ENCODE measurements at regions of chr12 and their contacts with region 1.

Region 1: GRCh38 chr12:93968536-93969285 is 179.7 kb upstream of the PLXNC1 start:
- DNase-seq: no peak
- ATAC-seq: no peak
- H3K4me3 ChIP-seq: no peak overlapping the region
- H3K27ac ChIP-seq: no peak overlapping the region
- H3K4me1 ChIP-seq: peaks cover 0 to 12% (median 4%) of the 10 kb centered on the region in 12 donors
- H3K27me3 ChIP-seq: no peaks in the 10 kb centered on the region
- CTCF ChIP-seq: no peak
- POLR2A ChIP-seq: no peak

Region 2: GRCh38 chr12:93908846-93909567 is 59.7 kb before region 1 on chr12:
- intact Hi-C with region 1: loop called in 4 of 10 experiments (anchors 5 to 10 kb)
- DNase-seq: peak in 3 of 5 donors; percentile 23 to 62 (median 34)
- ATAC-seq: peak; percentile 70 to 93 (median 81)
- H3K4me3 ChIP-seq: no peak overlapping the region
- H3K27ac ChIP-seq: peak overlapping the region in 3 of 12 donors; percentile 33 to 49 (median 47)
- H3K4me1 ChIP-seq: peaks cover 0 to 18% (median 0%) of the 10 kb centered on the region in 12 donors
- H3K27me3 ChIP-seq: no peaks in the 10 kb centered on the region
- CTCF ChIP-seq: no peak
- POLR2A ChIP-seq: no peak

Region 3: GRCh38 chr12:93918262-93918661 is 50.4 kb before region 1 on chr12:
- intact Hi-C with region 1: loop called in 3 of 10 experiments (anchors 10 kb)
- DNase-seq: no peak
- ATAC-seq: peak in 3 of 4 donors; percentile 19 to 58 (median 54)
- H3K4me3 ChIP-seq: no peak overlapping the region
- H3K27ac ChIP-seq: peak overlapping the region in 5 of 12 donors; percentile 25 to 54 (median 45)
- H3K4me1 ChIP-seq: peaks cover 0 to 14% (median 0%) of the 10 kb centered on the region in 12 donors
- H3K27me3 ChIP-seq: no peaks in the 10 kb centered on the region
- CTCF ChIP-seq: no peak
- POLR2A ChIP-seq: no peak

Measured in heart left ventricle (tissue), 16 donors.